Right cardiac atrium (tissue), 5 donors: ENCODE measurements at regions of chr1 and their contacts with region 1.

Region 1: GRCh38 chr1:26035959-26036755 is 9.8 kb downstream of the SLC30A2 start:
- DNase-seq: peak; percentile 83 to 92 (median 91)
- ATAC-seq: peak; percentile 91
- H3K4me3 ChIP-seq: peak overlapping the region; percentile 61
- H3K27ac ChIP-seq: peak overlapping the region; percentile 81
- H3K4me1 ChIP-seq: no peaks in the 10 kb centered on the region
- H3K27me3 ChIP-seq: no peaks in the 10 kb centered on the region

Region 2: DNA sequence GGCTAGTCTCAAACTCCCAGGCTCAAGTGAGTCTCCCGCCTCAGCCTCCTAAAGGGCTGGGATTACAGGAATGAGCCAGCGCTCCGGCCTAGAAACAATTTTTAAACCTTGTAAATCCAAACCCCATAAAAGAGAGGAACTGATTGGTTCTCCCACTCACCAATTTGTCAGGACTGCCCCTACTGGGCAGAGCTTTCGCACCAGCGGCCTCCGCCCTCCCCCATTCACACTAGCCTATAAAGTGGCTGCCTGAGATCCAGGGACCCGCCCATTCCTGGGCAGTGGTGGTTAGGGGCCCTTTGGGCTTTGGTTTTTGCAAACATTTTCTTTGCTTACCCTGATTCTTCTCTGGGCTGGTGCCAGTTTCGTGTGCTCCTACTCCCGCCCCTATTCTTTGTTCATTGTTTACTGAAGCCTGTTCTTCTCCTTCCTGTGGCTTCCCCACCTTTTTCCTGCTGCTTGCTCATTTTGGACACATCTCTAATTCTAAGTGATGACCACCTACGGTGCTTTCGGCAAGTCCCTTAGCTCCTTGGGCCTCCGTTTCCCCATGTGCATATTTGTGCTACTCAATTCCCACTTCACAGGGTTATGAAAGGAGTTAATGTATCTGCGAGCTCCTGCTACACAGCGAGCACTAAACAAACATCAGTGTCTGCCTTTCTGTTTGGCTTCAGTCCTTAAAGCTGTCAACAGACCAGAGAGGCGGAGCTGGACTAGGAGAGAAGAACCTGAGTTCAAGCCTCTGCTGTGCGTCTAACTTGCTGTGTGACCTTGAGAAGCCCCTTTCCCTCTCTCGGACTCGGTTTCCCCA is 1330.7 kb before region 1 on chr1:
- intact Hi-C with region 1: loop called in 1 of 4 experiments (anchors 10 kb)
- DNase-seq: peak; percentile 91 to 96 (median 94)
- ATAC-seq: peak; percentile 98 to 99
- H3K4me3 ChIP-seq: peak overlapping the region; percentile 17
- H3K27ac ChIP-seq: peak overlapping the region; percentile 84
- H3K4me1 ChIP-seq: peaks cover 2% of the 10 kb centered on the region
- H3K27me3 ChIP-seq: no peaks in the 10 kb centered on the region

Region 3: GRCh38 chr1:26102526-26102925 is 66.4 kb after region 1 on chr1:
- intact Hi-C with region 1: loop called in 1 of 4 experiments (anchors 5 kb)
- DNase-seq: no peak
- ATAC-seq: no peak
- H3K4me3 ChIP-seq: no peak overlapping the region
- H3K27ac ChIP-seq: no peak overlapping the region
- H3K4me1 ChIP-seq: no peaks in the 10 kb centered on the region
- H3K27me3 ChIP-seq: no peaks in the 10 kb centered on the region

Region 4: GRCh38 chr1:26161415-26162219 is 125.5 kb after region 1 on chr1:
- intact Hi-C with region 1: loop called in 1 of 4 experiments (anchors 5 kb)
- DNase-seq: peak; percentile 69 to 89 (median 89)
- ATAC-seq: peak; percentile 52 to 54
- H3K4me3 ChIP-seq: peak overlapping the region; percentile 32
- H3K27ac ChIP-seq: peak overlapping the region; percentile 54
- H3K4me1 ChIP-seq: peaks cover 11% of the 10 kb centered on the region
- H3K27me3 ChIP-seq: no peaks in the 10 kb centered on the region